SK-N-SH (cell line): ENCODE measurements at regions of chr22 and their contacts with region 1.

Region 1: DNA sequence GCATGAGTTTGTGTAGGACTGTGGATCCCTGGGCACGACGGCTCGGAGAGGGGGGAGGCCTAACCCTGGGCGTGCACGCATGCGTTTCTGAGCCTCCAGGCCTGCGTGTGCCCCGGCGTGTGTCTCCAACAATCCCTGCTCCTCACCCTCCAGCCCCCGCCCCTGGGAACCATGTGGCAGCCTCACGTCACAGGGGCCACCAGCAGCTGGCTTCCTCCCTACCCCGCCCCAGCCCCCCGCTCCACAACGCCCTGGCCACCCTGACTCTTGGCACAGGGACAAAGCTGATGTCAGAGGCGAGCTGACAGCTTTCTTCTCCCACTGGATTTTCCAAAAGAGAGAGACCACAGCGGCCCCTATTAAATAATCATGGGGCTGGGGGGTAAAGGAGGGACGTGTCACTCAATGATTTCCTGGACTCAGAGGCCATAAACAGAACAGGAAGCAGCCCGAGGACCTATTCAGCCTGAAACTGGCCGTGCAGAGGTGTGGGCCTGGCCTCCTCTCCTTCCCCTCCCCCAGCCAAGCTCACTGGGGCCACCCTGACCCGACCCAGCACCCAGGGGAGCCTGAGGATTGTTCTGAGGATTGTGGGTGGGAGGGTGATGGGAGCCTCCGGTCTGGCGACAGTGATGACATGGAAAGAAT is 6.8 kb upstream of the LIF start:
- DNase-seq: peak; percentile 84
- H3K4me3 ChIP-seq: no peak overlapping the region
- H3K27ac ChIP-seq: peak overlapping the region in 1 of 2 experiments; percentile 63; a peak in 2 of 4 replicates
- H3K4me1 ChIP-seq: peaks cover 29 to 40% of the 10 kb centered on the region in 2 experiments
- H3K27me3 ChIP-seq: no peaks in the 10 kb centered on the region
- CTCF ChIP-seq: no peak
- EP300 ChIP-seq: no peak
- RAD21 ChIP-seq: no peak

Region 2: GRCh38 chr22:30116362-30117117 is 136.8 kb before region 1 on chr22:
- CTCF ChIA-PET with region 1: interaction called, 10 read pairs
- POLR2A ChIA-PET with region 1: no interaction called
- DNase-seq: no peak
- H3K4me3 ChIP-seq: no peak overlapping the region
- H3K27ac ChIP-seq: no peak overlapping the region
- H3K4me1 ChIP-seq: no peaks in the 10 kb centered on the region; a peak in 2 of 4 replicates
- H3K27me3 ChIP-seq: no peaks in the 10 kb centered on the region
- CTCF ChIP-seq: no peak
- EP300 ChIP-seq: no peak
- RAD21 ChIP-seq: no peak

Region 3: DNA sequence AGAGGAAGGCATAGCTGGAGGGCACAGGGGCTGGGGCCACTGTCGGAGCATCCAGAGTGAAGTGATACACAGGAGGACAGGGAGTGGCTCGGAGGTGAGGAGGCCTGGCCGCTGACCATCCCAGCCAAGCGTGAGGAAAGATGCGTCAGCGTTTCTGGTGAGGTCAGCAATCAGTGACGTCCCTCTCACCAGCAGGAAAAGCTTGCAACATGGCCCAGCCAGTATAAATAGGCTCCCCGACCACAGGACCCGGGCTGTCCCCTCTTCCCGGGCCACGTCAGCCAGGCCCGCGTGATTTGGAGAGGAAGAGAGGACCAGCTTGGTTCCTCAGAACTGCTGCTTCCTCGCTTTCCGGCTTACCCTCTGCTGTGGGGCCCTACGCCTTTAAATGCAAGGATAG is 17.5 kb after region 1 on chr22:
- CTCF ChIA-PET with region 1: interaction called, 11 read pairs
- POLR2A ChIA-PET with region 1: no interaction called
- DNase-seq: no peak
- H3K4me3 ChIP-seq: no peak overlapping the region
- H3K27ac ChIP-seq: no peak overlapping the region
- H3K4me1 ChIP-seq: no peaks in the 10 kb centered on the region; a peak in 1 of 4 replicates
- H3K27me3 ChIP-seq: no peaks in the 10 kb centered on the region
- CTCF ChIP-seq: no peak
- EP300 ChIP-seq: no peak
- RAD21 ChIP-seq: no peak